HAP-1 (cell line): ENCODE measurements at regions of chr9 and their contacts with region 1.

Region 1: GRCh38 chr9:133030317-133031129 is at the start of gene GTF3C5:
- DNase-seq: peak; percentile 94 to 100
- H3K4me3 ChIP-seq: peak within 1 kb of the TSS; percentile 97
- H3K4me1 ChIP-seq: peaks cover 4% of the 10 kb centered on the region
- H3K27me3 ChIP-seq: no peaks in the 10 kb centered on the region

Region 2: DNA sequence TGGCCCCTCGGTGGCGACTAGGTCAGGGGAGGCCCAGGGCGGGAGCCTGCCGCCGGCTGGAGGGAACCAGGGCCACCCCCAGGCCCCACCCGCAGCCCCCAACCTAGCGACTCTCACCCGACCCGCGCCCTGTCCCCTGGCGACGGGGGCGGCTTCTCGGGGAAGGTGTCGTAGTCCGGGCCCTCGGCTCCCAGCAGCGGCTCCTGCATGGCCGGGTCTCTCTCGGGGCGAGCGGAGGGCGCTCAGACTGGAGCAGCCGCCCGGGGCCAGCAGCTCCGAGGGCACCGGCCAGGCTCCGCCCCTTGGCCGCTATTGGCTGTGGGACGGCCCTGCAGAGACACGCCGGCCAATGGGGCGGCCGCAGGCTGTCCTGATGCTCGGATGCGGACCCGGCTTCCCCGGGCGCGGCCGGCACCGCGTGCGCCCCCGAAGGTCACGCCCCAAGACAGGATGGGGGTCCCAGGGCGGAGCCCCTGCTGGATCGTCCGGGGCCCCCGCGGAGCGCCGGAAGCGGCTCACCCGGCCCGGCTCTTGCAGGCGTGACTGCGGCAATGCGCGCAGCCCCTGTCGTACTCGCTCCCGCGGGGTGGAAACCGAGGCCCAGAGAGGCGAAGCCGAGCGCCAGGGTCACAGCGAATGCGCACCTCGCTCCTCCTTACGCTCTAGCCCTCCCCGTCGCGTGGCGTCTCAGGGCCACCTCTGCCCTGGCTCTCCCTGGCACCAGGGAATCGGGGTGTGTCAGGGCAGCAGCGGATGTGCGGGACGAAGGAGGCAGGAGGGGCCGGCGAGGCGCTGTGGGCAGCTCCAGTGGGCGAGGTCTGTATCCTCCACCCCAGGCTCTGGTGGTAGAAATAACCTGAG is 448.6 kb after region 1 on chr9 and contains the start of gene SLC2A6:
- in situ Hi-C with region 1: loop called (anchors 25 kb)
- DNase-seq: peak; percentile 82 to 91
- H3K4me3 ChIP-seq: peak within 1 kb of the TSS; percentile 56
- H3K4me1 ChIP-seq: peaks cover 14% of the 10 kb centered on the region
- H3K27me3 ChIP-seq: no peaks in the 10 kb centered on the region